Endothelial cell of umbilical vein (primary cell): ENCODE measurements at regions of chr11 and their contacts with region 1.

Region 1: DNA sequence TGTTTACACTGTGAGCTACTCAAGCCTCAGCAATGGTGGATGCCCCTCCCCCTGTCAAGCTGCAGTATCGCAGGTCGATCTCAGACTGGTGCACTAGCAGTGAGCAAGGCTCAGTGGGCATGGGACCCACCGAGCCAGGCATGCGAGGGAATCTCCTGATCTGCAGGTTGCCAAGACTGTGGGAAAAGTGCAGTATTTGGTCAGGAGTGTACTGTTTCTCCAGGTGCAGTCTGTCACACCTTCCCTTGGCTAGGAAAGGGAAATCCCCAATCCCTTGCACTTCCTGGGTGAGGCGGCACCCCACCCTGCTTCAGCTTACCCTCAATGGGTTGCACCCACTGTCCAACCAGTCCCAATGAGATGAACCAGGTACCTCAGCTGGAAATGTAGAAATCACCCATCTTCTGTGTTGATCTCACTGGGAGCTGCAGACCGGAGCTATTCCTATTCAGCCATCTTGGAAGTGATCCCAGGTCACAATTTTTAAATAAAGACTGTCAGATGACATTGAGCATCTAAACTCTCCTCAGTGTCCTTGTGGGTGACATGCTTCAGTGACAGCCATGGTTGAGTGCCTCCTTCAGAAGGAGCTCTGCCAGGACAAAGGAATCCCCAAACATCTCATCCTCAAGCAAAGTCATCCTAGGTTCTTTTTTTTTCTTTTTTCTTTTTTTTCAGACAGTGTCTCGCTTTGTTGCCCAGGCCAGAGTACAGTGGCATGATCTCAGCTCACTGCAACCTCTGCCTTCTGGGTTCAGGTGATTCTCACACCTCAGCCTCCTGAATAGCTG is 10.8 kb downstream of the SLC22A24 start:
- DNase-seq: no peak
- H3K4me3 ChIP-seq: no peak overlapping the region
- H3K27ac ChIP-seq: no peak overlapping the region
- H3K4me1 ChIP-seq: no peaks in the 10 kb centered on the region
- H3K27me3 ChIP-seq: peaks cover 9 to 11% of the 10 kb centered on the region in 2 experiments
- CTCF ChIP-seq: no peak
- POLR2A ChIP-seq: no peak

Region 2: GRCh38 chr11:63146581-63146980 is 13.4 kb after region 1 on chr11:
- CTCF ChIA-PET with region 1: interaction called, 13 read pairs
- POLR2A ChIA-PET with region 1: no interaction called
- dilution Hi-C with region 1: no loop called
- intact Hi-C with region 1: no loop called
- DNase-seq: peak; percentile 40
- H3K4me3 ChIP-seq: no peak overlapping the region
- H3K27ac ChIP-seq: peak overlapping the region; percentile 97
- H3K4me1 ChIP-seq: peaks cover 30% of the 10 kb centered on the region
- H3K27me3 ChIP-seq: no peaks in the 10 kb centered on the region
- CTCF ChIP-seq: no peak
- POLR2A ChIP-seq: no peak

Region 3: GRCh38 chr11:63165706-63166310 is 32.6 kb after region 1 on chr11:
- CTCF ChIA-PET with region 1: no interaction called
- POLR2A ChIA-PET with region 1: no interaction called
- dilution Hi-C with region 1: no loop called
- intact Hi-C with region 1: loop called (anchors 1 kb)
- DNase-seq: peak; percentile 68
- H3K4me3 ChIP-seq: no peak overlapping the region
- H3K27ac ChIP-seq: peak overlapping the region; percentile 77
- H3K4me1 ChIP-seq: peaks cover 16% of the 10 kb centered on the region
- H3K27me3 ChIP-seq: peaks cover 0 to 2% of the 10 kb centered on the region in 2 experiments
- CTCF ChIP-seq: no peak
- POLR2A ChIP-seq: no peak

Region 4: DNA sequence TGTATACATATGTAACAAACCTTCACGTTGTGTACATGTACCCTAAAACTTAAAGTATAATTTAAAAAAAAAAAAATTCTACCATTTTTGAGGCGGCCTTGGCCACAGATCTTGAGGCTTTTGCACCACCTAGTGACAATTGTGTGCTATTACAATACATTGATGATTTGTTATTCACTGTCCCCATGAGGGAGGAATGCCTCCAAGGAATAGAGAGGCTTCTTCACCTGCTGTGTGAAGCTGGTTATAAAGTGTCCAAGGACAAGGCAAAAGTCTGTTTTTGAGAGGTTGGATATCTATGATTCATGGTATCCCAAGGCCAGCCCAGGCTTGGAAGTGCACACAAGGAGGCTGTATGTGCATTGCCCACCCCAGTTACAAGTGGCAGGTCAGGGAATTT is 79.6 kb after region 1 on chr11:
- CTCF ChIA-PET with region 1: interaction called, 82 read pairs
- POLR2A ChIA-PET with region 1: no interaction called
- dilution Hi-C with region 1: no loop called
- intact Hi-C with region 1: loop called (anchors 1 kb)
- DNase-seq: peak; percentile 14
- H3K4me3 ChIP-seq: no peak overlapping the region
- H3K27ac ChIP-seq: no peak overlapping the region
- H3K4me1 ChIP-seq: no peaks in the 10 kb centered on the region
- H3K27me3 ChIP-seq: peaks cover 0 to 2% of the 10 kb centered on the region in 2 experiments
- CTCF ChIP-seq: peak; percentile 34 to 36
- POLR2A ChIP-seq: no peak